ENCODE measurements at regions of chr7 and their contacts with region 1.

Region 1: GRCh38 chr7:121473645-121474300 is 77.7 kb upstream of the FAM3C start:
- DNase-seq: no peak
- ATAC-seq: no peak
- H3K4me3 ChIP-seq: no peak overlapping the region
- H3K27ac ChIP-seq: no peak overlapping the region
- H3K4me1 ChIP-seq: no peaks in the 10 kb centered on the region
- H3K27me3 ChIP-seq: no peaks in the 10 kb centered on the region
- CTCF ChIP-seq: no peak
- EP300 ChIP-seq: no peak
- POLR2A ChIP-seq: no peak
- RAD21 ChIP-seq: no peak

Region 2: GRCh38 chr7:121449329-121449728 is 24.4 kb before region 1 on chr7:
- CTCF ChIA-PET with region 1: no interaction called
- POLR2A ChIA-PET with region 1: no interaction called
- RAD21 ChIA-PET with region 1: no interaction called
- SMC1A ChIA-PET with region 1: interaction called, 21 read pairs
- in situ Hi-C with region 1: no loop called
- intact Hi-C with region 1: no loop called
- DNase-seq: no peak
- ATAC-seq: peak; percentile 35; the same call in 1 of the 3 replicates
- H3K4me3 ChIP-seq: no peak overlapping the region
- H3K27ac ChIP-seq: no peak overlapping the region
- H3K4me1 ChIP-seq: no peaks in the 10 kb centered on the region
- H3K27me3 ChIP-seq: no peaks in the 10 kb centered on the region
- CTCF ChIP-seq: no peak
- EP300 ChIP-seq: no peak
- POLR2A ChIP-seq: no peak
- RAD21 ChIP-seq: no peak

Region 3: DNA sequence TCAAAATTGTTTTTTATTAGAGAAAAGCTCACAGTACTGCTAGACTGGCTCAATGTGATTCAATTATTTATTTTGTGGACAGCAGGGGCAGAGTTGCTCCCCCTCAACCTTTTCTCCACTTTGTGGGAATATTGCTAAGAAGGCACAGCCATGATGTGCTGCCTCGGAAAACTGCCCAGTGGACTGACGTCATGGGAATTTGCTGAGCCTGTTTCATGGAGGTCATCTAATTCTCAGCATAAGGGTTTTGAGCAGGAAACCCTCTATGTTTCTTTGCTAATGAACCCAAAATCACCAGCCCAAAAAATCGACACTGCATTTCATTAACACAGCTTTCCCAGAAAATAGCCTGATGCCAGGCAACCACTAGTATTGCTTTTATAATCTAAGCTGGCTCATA is 151.2 kb after region 1 on chr7:
- CTCF ChIA-PET with region 1: no interaction called
- POLR2A ChIA-PET with region 1: no interaction called
- RAD21 ChIA-PET with region 1: no interaction called
- SMC1A ChIA-PET with region 1: no interaction called
- in situ Hi-C with region 1: no loop called
- intact Hi-C with region 1: no loop called
- DNase-seq: no peak
- ATAC-seq: no peak
- H3K4me3 ChIP-seq: no peak overlapping the region
- H3K27ac ChIP-seq: no peak overlapping the region
- H3K4me1 ChIP-seq: no peaks in the 10 kb centered on the region
- H3K27me3 ChIP-seq: no peaks in the 10 kb centered on the region
- CTCF ChIP-seq: no peak
- EP300 ChIP-seq: no peak
- POLR2A ChIP-seq: no peak
- RAD21 ChIP-seq: no peak

Measured in GM12878 (cell line).